ENCODE measurements at regions of chr20 and their contacts with region 1.

Region 1: GRCh38 chr20:60395991-60396390 is 437.8 kb downstream of the CDH26 start:
- DNase-seq: no peak
- ATAC-seq: no peak
- H3K4me3 ChIP-seq: no peak overlapping the region
- H3K27ac ChIP-seq: no peak overlapping the region
- H3K4me1 ChIP-seq: no peaks in the 10 kb centered on the region
- H3K27me3 ChIP-seq: no peaks in the 10 kb centered on the region
- CTCF ChIP-seq: no peak

Region 2: GRCh38 chr20:60310560-60311349 is 85.2 kb before region 1 on chr20:
- CTCF ChIA-PET with region 1: no interaction called
- POLR2A ChIA-PET with region 1: no interaction called
- in situ Hi-C with region 1: no loop called
- intact Hi-C with region 1: no loop called
- DNase-seq: no peak
- ATAC-seq: no peak
- H3K4me3 ChIP-seq: no peak overlapping the region
- H3K27ac ChIP-seq: no peak overlapping the region
- H3K4me1 ChIP-seq: no peaks in the 10 kb centered on the region
- H3K27me3 ChIP-seq: no peaks in the 10 kb centered on the region; the same call in 1 of the 2 replicates
- CTCF ChIP-seq: no peak

Region 3: DNA sequence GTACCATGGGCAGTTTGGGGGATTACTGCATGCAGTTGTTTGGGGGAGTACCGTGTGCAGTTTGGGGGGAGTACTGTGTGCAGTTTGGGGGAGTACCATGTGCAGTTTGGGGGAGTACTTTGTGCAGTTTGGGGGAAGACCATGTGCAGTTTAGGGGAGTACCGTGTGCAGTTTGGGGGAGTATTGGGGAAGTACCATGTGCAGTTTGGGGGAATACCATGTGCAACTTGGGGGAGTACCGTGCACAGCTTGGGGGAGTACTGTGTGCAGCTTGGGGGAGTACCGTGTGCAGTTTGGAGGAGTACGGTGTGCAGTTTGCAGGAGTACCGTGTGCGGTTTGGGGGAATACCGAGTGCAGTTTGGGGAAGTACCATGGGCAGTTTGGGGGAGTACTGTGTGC is 878.3 kb after region 1 on chr20:
- CTCF ChIA-PET with region 1: interaction called, 11 read pairs
- POLR2A ChIA-PET with region 1: no interaction called
- in situ Hi-C with region 1: no loop called
- intact Hi-C with region 1: no loop called
- DNase-seq: no peak
- ATAC-seq: no peak
- H3K4me3 ChIP-seq: no peak overlapping the region
- H3K27ac ChIP-seq: no peak overlapping the region
- H3K4me1 ChIP-seq: no peaks in the 10 kb centered on the region
- H3K27me3 ChIP-seq: no peaks in the 10 kb centered on the region; the same call in 1 of the 2 replicates
- CTCF ChIP-seq: no peak